BJ (cell line): ENCODE measurements at regions of chr19 and their contacts with region 1.

Region 1: GRCh38 chr19:6021878-6022569 is 44.1 kb upstream of the RANBP3 start:
- DNase-seq: no peak
- H3K4me3 ChIP-seq: no peak overlapping the region
- H3K27me3 ChIP-seq: no peaks in the 10 kb centered on the region
- CTCF ChIP-seq: peak; percentile 75

Region 2: DNA sequence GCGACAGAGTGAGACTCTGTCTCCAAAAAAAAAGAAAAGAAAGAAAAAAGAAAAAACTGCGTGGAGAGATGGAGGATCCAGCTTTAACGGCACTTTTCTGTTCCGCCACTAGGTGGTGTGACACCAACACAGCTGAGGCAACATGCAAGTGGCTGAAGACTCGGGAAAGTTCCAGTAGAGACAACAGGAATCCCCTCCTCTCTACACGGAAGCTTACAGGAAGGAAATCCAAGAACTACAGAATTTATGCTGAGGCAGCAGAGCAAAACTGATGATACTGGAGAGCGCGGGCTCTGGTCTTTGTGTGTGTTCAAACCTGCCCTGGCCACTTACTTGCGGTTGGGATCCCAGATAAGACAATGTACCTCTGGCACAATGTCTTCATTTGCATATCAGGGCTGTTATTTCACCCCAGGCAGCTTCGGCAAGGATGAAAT is 54.0 kb before region 1 on chr19:
- CTCF ChIA-PET with region 1: interaction called, 22 read pairs
- POLR2A ChIA-PET with region 1: no interaction called
- DNase-seq: no peak
- H3K4me3 ChIP-seq: no peak overlapping the region
- H3K27me3 ChIP-seq: no peaks in the 10 kb centered on the region
- CTCF ChIP-seq: peak; percentile 86

Region 3: GRCh38 chr19:5977785-5978605 is 44.0 kb before region 1 on chr19 and contains the start of gene RANBP3:
- CTCF ChIA-PET with region 1: interaction called, 14 read pairs
- POLR2A ChIA-PET with region 1: no interaction called
- DNase-seq: peak; percentile 98
- H3K4me3 ChIP-seq: peak within 1 kb of the TSS; percentile 98
- H3K27me3 ChIP-seq: no peaks in the 10 kb centered on the region
- CTCF ChIP-seq: 0 out of 2 replicates have a peak, but pooled peaks have one; percentile 2
- polyA plus RNA-seq, gene RANBP3: 54.2 and 68.6 TPM in 2 replicates

Region 4: GRCh38 chr19:5987077-5987818 is 34.8 kb before region 1 on chr19:
- CTCF ChIA-PET with region 1: interaction called, 33 read pairs
- POLR2A ChIA-PET with region 1: no interaction called
- DNase-seq: no peak
- H3K4me3 ChIP-seq: 0 out of 2 replicates have a peak overlapping the region, but pooled peaks have one; percentile 0
- H3K27me3 ChIP-seq: no peaks in the 10 kb centered on the region
- CTCF ChIP-seq: peak; percentile 93

Region 5: DNA sequence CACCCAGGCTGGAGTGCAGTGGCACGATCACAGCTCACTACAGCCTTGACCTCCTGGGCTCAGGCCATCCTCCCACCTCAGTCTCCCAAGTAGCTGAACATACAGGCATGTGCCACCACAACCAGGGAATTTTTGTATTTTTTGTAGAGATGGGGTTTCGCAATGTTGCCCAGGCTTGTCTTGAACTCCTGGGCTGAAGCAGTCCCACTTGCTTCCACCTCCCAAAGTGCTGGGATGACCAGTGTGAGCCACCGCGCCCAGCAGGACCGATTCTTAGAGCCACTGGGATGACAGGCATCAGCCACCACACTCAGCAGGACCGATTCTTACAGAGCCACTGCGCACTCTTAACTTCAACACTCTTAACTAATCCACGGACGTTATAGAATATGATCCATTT is 10.8 kb after region 1 on chr19:
- CTCF ChIA-PET with region 1: interaction called, 19 read pairs
- POLR2A ChIA-PET with region 1: no interaction called
- DNase-seq: no peak
- H3K4me3 ChIP-seq: no peak overlapping the region
- H3K27me3 ChIP-seq: no peaks in the 10 kb centered on the region
- CTCF ChIP-seq: no peak

Region 6: GRCh38 chr19:6066661-6067646 is 44.9 kb after region 1 on chr19:
- CTCF ChIA-PET with region 1: no interaction called
- POLR2A ChIA-PET with region 1: no interaction called
- DNase-seq: peak; percentile 91
- H3K4me3 ChIP-seq: no peak overlapping the region
- H3K27me3 ChIP-seq: no peaks in the 10 kb centered on the region
- CTCF ChIP-seq: no peak